ENCODE measurements at regions of chr17 and their contacts with region 1.

Region 1: GRCh38 chr17:8785547-8786413 is 13.4 kb downstream of the MFSD6L start:
- DNase-seq: peak; percentile 1
- H3K4me3 ChIP-seq: no peak overlapping the region
- H3K27me3 ChIP-seq: no peaks in the 10 kb centered on the region
- CTCF ChIP-seq: peak; percentile 88

Region 2: GRCh38 chr17:8383143-8383822 is 402.5 kb before region 1 on chr17 and contains the start of gene RPL26:
- CTCF ChIA-PET with region 1: interaction called, 11 read pairs
- POLR2A ChIA-PET with region 1: no interaction called
- DNase-seq: peak; percentile 91
- H3K4me3 ChIP-seq: peak within 1 kb of the TSS; percentile 57
- H3K27me3 ChIP-seq: no peaks in the 10 kb centered on the region
- CTCF ChIP-seq: peak; percentile 90
- polyA plus RNA-seq, gene RPL26: 2,021 and 3,734 TPM in 2 replicates

Region 3: GRCh38 chr17:8409966-8410864 is 375.6 kb before region 1 on chr17:
- CTCF ChIA-PET with region 1: interaction called, 26 read pairs
- POLR2A ChIA-PET with region 1: no interaction called
- DNase-seq: no peak
- H3K4me3 ChIP-seq: no peak overlapping the region
- H3K27me3 ChIP-seq: peaks cover 1% of the 10 kb centered on the region; the same call in 1 of the 2 replicates
- CTCF ChIP-seq: peak; percentile 89

Region 4: DNA sequence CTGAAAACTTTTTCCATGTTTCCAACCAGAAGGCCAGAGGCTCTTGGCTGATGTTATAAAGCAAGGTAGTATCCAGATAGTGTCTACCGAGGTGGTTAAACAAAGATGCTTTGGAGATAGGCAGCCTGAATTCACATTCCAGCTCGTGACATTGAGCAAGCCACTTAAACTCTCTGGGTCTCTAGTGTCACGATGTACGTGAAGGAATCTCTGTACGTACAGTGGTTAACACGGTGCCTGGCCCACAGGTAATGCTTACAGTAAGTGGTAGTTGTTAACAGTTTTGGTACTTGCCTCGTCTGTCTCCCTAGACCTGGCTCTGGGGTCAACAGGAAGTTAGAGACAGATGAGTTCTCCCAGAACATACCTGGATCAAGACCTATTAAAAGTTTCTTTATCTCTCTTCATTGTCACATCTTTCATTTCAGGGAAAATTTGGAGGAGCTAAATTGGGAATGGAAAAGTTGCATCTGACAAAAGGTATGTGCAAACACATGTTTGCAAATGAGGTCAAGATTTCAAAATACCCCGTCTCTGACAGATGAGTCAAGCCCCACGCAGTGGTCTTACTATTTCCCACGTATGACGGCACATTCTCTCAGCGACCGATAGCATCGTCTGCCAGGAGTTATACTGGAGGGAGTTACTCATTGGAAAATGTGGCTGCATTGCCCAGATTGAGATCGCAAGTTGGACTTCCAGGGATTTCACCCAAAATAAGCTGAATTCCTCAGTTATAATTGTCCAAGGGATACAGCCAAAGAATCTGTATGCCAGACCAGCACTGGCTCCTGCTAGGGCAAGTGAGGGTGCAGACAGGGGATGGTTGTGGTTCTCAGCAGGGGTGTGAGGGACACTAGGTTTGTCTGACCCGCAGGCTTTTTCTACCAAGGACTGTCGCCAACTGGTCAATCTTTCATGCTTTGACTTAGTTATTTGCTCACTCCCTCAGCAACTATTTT is 136.3 kb before region 1 on chr17:
- CTCF ChIA-PET with region 1: no interaction called
- POLR2A ChIA-PET with region 1: no interaction called
- DNase-seq: peak; percentile 98
- H3K4me3 ChIP-seq: no peak overlapping the region
- H3K27me3 ChIP-seq: no peaks in the 10 kb centered on the region
- CTCF ChIP-seq: no peak

Region 5: DNA sequence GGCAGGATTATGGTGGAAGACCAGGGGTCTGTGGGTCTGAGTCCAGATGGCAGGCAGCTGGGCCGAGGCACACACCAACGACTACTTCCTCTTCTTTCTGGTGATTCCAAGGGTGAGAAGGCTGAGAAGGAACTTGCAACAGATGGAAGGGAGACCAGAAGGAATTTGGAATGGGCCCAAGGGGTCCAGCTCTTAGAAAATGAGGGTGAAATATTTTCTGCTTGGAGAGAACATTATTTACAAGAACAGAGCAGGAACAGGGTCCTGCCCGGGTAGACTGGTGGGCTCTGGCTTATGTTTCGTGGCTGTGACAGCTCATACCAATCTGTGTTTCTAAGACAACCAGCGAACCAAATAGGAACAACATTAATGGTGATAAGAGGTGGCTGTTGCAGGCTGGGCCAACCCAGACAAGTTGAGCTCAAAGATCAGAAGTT is 77.7 kb before region 1 on chr17:
- CTCF ChIA-PET with region 1: no interaction called
- POLR2A ChIA-PET with region 1: no interaction called
- DNase-seq: no peak
- H3K4me3 ChIP-seq: no peak overlapping the region
- H3K27me3 ChIP-seq: peaks cover 4% of the 10 kb centered on the region
- CTCF ChIP-seq: no peak

Region 6: DNA sequence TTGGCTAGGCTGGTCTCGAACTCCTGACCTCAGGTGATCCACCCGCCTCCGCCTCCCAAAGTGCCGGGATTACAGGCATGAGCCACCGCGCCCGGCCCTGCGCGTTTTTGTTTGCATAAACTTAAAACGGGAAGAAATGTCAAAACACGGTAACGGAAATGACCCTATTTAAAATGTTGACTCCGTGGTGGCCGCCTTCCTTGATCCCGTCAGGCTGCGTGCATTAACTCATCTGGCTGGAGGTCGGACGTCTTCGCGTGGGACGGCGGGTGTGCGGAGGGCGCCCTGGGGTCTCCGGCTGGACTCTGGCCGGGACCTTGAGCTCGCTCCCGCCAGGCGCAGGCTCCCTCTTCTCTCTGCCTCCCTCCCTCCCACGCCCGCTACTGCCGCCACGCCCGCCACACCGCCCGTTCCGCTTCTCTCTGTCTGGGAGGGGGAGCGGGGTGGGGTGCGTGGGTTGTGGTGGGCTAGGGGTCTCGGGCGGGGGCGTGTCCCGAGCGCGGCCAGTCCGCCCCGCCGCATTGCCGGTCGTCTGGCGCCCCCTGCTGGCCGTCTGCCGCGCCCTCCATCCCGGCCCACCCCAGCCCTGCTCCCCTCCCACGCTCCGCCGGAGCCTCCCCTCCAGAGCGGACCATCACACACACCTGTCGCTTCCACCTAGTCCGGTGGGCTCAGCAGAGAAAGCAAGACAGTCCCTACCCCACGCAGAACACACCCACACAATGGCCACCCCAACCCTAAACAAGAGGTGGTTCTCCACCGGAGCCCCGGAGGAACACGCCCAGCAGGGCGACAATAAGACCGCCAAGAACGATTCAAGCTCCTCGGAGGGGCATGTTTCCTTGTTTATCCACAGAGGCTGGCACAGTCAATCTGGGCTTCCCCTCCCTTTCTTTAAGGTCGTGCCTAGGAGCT is 39.9 kb before region 1 on chr17:
- CTCF ChIA-PET with region 1: interaction called, 19 read pairs
- POLR2A ChIA-PET with region 1: no interaction called
- DNase-seq: no peak
- H3K4me3 ChIP-seq: peak overlapping the region; percentile 69
- H3K27me3 ChIP-seq: peaks cover 3% of the 10 kb centered on the region
- CTCF ChIP-seq: peak; percentile 63

Region 7: DNA sequence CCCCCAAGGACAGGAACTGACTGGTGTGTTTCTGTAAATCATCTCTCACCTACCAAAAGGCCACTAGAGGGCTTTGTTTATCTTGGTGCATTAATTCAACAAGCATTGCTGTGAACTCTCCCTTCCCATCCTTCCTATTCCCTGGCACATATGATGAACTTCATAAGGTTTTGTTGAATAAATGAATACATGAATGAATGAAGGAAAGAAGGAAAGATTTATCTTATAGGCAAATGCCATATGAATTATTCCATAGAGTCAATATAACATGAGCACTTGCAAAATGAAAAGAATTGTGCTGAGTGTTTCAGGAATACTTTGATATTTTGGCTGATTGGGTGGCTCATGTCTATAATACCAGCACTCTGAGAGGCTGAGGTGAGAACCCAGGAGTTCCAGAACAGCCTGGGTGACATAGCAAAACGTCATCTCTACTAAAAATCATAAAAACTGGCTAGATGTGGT is 31.8 kb before region 1 on chr17:
- CTCF ChIA-PET with region 1: interaction called, 13 read pairs
- POLR2A ChIA-PET with region 1: no interaction called
- DNase-seq: no peak
- H3K4me3 ChIP-seq: no peak overlapping the region
- H3K27me3 ChIP-seq: peaks cover 3% of the 10 kb centered on the region
- CTCF ChIP-seq: peak; percentile 42

Region 8: DNA sequence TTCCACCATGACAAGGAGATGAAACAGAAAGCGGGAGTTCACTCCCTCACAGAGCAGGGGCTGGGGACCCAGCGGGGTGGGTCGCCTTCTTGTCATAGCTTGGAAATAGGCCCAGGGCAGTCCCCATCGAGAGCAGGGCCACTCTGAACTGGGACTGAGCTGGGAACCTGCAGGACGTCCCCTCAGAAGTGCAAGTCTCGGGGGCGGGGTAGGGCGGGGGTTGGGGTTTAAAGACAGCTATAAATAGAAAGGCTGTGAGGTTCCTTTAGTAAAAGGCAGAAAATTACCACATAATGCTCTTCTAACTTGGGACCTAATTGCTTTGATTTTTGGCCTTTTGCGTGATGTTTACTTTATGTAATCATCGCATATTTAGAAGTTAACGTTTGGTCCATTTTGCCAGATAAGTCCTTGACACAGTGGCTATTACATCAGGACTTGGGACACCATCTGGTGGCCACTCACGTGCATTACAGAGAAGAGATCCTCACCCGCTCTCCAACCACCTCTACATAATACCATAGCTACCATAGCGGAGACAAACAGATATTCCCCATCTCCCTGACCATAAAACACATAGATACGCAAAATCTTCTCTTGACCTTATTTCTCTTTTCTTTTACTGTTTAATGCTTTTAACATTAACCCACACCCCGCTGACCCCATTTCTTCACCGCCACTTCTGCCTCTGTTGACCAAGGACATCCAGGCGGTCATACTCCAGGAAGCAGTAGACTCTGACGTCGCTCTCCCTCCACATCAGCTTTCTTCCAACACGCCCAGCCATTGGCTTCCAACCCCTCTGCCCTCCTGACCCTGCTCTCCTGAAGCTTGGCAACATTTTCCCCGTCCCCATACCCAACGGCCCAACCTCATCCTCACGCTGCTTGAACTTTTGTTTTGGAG is 109.1 kb after region 1 on chr17:
- CTCF ChIA-PET with region 1: interaction called, 27 read pairs
- POLR2A ChIA-PET with region 1: no interaction called
- DNase-seq: peak; percentile 7
- H3K4me3 ChIP-seq: no peak overlapping the region
- H3K27me3 ChIP-seq: no peaks in the 10 kb centered on the region; the same call in 1 of the 2 replicates
- CTCF ChIP-seq: peak; percentile 78

Measured in BJ (cell line).